Colonic mucosa (tissue), 4 donors: ENCODE measurements at regions of chr17 and their contacts with region 1.

Region 1: GRCh38 chr17:35119368-35120165 is at the start of gene RAD51D:
- DNase-seq: peak; percentile 63
- H3K4me3 ChIP-seq: peak within 1 kb of the TSS; percentile 77
- H3K27ac ChIP-seq: peak within 1 kb of the TSS; percentile 72
- H3K4me1 ChIP-seq: peaks cover 5% of the 10 kb centered on the region
- H3K27me3 ChIP-seq: no peaks in the 10 kb centered on the region
- CTCF ChIP-seq: peak; percentile 90
- total RNA-seq, gene RAD51D: 6.1 to 17.3 TPM

Region 2: GRCh38 chr17:34420254-34420766 is 699.3 kb before region 1 on chr17:
- intact Hi-C with region 1: loop called (anchors 5 kb)
- DNase-seq: peak; percentile 66
- H3K4me3 ChIP-seq: no peak overlapping the region
- H3K27ac ChIP-seq: no peak overlapping the region
- H3K4me1 ChIP-seq: no peaks in the 10 kb centered on the region
- H3K27me3 ChIP-seq: peaks cover 3% of the 10 kb centered on the region
- CTCF ChIP-seq: peak; percentile 96

Region 3: GRCh38 chr17:34542700-34543336 is 576.7 kb before region 1 on chr17:
- intact Hi-C with region 1: loop called (anchors 2 kb)
- DNase-seq: peak; percentile 30
- H3K4me3 ChIP-seq: no peak overlapping the region
- H3K27ac ChIP-seq: no peak overlapping the region
- H3K4me1 ChIP-seq: no peaks in the 10 kb centered on the region
- H3K27me3 ChIP-seq: no peaks in the 10 kb centered on the region
- CTCF ChIP-seq: peak; percentile 78

Region 4: DNA sequence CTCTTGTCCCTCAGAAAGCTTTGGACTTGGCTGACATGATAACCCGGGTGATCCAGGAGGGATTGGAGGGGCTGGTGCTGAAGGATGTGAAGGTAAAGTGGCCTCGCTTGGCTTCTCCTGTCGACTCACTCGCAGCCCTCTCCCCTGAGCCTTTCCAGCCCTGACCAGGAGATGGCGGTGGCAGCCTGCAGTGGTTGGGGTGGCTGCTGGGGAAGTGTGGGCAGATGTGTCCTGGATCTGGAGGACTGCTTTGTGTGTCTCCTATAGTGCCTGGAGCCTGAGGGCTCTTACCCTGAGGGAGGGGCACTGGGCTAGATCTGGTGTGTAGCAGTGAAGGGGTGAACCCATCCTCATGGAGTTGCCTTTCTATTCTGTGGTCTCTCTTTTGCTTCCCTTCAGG is 121.4 kb before region 1 on chr17:
- intact Hi-C with region 1: loop called (anchors 2 kb)
- DNase-seq: peak; percentile 77
- H3K4me3 ChIP-seq: no peak overlapping the region
- H3K27ac ChIP-seq: peak overlapping the region; percentile 45
- H3K4me1 ChIP-seq: no peaks in the 10 kb centered on the region
- H3K27me3 ChIP-seq: no peaks in the 10 kb centered on the region
- CTCF ChIP-seq: peak; percentile 79

Region 5: DNA sequence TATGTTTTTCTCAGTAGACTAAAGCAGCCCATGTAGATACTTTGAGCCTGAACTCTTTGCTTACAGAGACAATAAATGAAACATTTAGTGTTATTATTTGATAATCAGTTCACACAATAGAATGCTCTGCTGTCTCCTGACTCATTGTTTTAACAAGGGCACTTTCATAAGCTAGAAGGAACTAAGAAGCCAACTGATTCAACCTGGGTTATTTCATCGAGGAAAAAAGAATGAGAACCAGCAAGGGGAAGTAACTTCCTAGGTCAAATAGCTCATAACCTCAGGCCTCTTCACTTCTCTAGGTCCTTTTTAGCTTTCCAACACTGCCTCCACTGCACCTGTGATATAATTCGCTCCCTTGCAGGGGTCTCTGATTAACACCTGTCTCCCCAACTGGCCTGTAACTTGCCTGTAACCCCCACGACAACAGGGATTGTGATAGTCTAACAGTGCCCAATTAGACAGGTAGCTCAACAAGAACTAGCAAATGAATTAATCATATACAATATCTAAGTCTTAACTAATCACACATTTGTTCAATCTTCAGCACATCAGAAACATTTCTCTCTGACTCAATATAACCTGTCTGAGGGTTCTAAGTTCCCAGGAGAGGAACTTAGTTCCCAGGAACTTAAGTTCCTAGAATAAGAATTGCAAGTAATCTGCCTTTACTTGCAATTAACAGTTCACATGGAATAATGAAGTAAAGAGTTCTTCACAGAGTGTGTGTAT is 90.9 kb before region 1 on chr17:
- intact Hi-C with region 1: no loop called
- DNase-seq: no peak
- H3K4me3 ChIP-seq: no peak overlapping the region
- H3K27ac ChIP-seq: no peak overlapping the region
- H3K4me1 ChIP-seq: no peaks in the 10 kb centered on the region
- H3K27me3 ChIP-seq: no peaks in the 10 kb centered on the region
- CTCF ChIP-seq: no peak